ENCODE measurements at regions of chr15 and their contacts with region 1.

Region 1: GRCh38 chr15:37900326-37901221 is 33.9 kb upstream of the TMCO5A start:
- DNase-seq: peak; percentile 47
- H3K4me3 ChIP-seq: no peak overlapping the region
- H3K27ac ChIP-seq: no peak overlapping the region
- H3K4me1 ChIP-seq: peaks cover 31% of the 10 kb centered on the region
- H3K27me3 ChIP-seq: peaks cover 3 to 15% of the 10 kb centered on the region in 2 experiments
- CTCF ChIP-seq: no peak
- POLR2A ChIP-seq: no peak

Region 2: DNA sequence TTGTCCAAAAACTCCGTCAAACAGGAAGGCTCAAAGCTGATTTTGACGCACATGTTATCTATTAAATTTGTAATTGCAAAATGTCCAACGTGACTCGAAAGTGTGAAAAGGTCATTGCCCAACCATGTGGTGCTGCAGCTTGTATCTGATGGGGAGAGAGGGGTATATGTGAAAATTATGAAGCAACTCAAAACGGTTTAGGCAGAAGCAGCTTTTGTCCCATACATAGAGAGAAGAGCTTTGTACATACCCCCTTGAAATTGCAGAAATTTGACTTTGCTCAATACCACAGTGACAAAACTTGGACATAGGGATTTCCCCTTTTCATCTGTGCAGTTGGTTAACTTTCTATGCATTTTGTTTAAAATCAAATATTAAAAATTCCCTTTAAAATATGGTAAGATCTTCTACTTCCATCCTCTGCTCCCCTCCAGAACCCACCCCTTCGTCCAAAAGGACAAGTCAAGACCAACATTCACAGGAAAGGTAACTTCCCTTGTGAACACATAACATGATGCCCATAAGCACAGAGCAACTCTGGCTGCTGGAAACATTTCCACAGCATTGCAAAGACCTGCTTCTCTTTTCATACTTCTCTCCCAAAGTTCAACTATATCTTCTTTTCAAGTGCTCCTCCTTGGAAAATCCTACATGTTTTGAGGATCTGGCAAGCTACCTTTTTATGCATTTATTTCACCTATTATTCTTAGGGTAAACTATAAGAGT is 1426.6 kb after region 1 on chr15:
- CTCF ChIA-PET with region 1: no interaction called
- POLR2A ChIA-PET with region 1: no interaction called
- dilution Hi-C with region 1: no loop called
- intact Hi-C with region 1: loop called (anchors 10 kb)
- DNase-seq: no peak
- H3K4me3 ChIP-seq: no peak overlapping the region
- H3K27ac ChIP-seq: no peak overlapping the region
- H3K4me1 ChIP-seq: no peaks in the 10 kb centered on the region
- H3K27me3 ChIP-seq: no peaks in the 10 kb centered on the region
- CTCF ChIP-seq: no peak
- POLR2A ChIP-seq: no peak

Measured in endothelial cell of umbilical vein (primary cell).